ENCODE measurements at regions of chr3 and their contacts with region 1.

Region 1: DNA sequence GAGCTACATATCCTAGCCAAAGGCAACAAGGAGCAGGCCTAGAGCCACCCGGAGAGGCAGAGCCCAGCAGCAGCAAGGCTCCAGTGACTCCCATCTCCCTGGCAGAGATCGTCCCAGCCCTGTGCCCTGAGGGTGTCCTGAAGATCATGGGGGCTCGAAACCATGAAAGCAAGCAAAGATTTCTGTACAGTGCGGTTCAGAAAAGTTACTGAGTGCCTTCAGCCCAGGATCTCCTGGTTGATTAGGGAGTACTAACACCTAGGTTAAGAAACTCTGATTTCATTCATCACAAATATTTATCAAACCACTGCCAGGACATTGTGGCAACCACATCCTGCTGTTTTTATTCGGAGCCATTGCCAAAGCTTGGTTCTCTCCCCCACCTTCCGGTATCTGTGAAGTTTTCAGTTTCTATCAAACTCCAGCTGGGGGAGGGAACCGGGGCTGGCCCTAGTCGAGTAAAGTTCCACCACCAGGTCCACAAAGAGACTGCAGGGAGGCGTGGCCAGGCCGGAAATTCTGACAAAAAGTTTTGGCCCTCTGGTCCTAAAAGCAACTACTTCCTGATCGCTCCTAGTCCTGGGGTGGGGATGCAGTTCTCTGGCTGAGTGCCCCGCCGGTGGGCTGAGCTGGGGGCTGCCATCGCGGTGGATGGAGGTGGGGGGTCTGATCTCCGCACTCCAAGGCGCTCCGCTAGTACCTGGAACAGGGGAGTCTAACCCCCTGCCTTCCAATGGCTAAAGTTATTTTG is 1.2 kb downstream of the RAB43 start:
- DNase-seq: peak; percentile 72
- ATAC-seq: peak; percentile 65
- H3K4me3 Mint-ChIP-seq: peak overlapping the region; percentile 87
- H3K27ac Mint-ChIP-seq: peak overlapping the region; percentile 86
- H3K4me1 Mint-ChIP-seq: peaks cover 54% of the 10 kb centered on the region
- H3K27me3 Mint-ChIP-seq: no peaks in the 10 kb centered on the region
- CTCF ChIP-seq: no peak

Region 2: GRCh38 chr3:128650096-128651050 is 470.1 kb before region 1 on chr3 and contains the start of gene RPN1:
- CTCF ChIA-PET with region 1: no interaction called
- POLR2A ChIA-PET with region 1: no interaction called
- intact Hi-C with region 1: loop called (anchors 1 kb)
- DNase-seq: peak; percentile 90
- ATAC-seq: peak; percentile 97
- H3K4me3 Mint-ChIP-seq: peak within 1 kb of the TSS; percentile 89
- H3K27ac Mint-ChIP-seq: peak within 1 kb of the TSS; percentile 86
- H3K4me1 Mint-ChIP-seq: peaks cover 41% of the 10 kb centered on the region
- H3K27me3 Mint-ChIP-seq: no peaks in the 10 kb centered on the region
- CTCF ChIP-seq: no peak
- total RNA-seq, gene RPN1: 93.4 and 95.2 TPM in 2 replicates

Region 3: DNA sequence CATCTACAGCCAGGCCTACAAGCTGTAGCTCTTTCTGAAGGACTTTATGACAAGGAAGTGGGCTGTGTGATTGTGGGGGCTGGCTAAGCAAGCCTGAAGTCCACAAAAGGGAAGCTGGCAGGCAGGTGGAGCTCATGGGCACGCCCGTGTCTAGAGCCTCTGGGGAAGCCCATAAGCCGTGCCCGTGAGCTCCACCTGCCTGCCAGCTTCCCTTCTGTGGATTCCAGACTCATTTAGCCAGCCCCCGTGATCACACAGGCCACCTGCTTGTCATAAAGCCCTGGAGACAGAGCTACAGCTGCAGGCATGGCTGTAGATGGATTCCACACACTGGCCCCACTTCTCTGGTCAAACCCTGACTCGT is 104.1 kb before region 1 on chr3:
- CTCF ChIA-PET with region 1: interaction called, 3 read pairs
- POLR2A ChIA-PET with region 1: interaction called, 14 read pairs
- intact Hi-C with region 1: loop called (anchors 1 kb)
- DNase-seq: peak; percentile 59
- ATAC-seq: peak; percentile 87
- H3K4me3 Mint-ChIP-seq: peak overlapping the region; percentile 55
- H3K27ac Mint-ChIP-seq: peak overlapping the region; percentile 80
- H3K4me1 Mint-ChIP-seq: peaks cover 41% of the 10 kb centered on the region
- H3K27me3 Mint-ChIP-seq: no peaks in the 10 kb centered on the region
- CTCF ChIP-seq: no peak

Region 4: GRCh38 chr3:129132097-129132866 is 11.9 kb after region 1 on chr3:
- CTCF ChIA-PET with region 1: no interaction called
- POLR2A ChIA-PET with region 1: interaction called, 10 read pairs
- intact Hi-C with region 1: no loop called
- DNase-seq: no peak
- ATAC-seq: no peak
- H3K4me3 Mint-ChIP-seq: no peak overlapping the region
- H3K27ac Mint-ChIP-seq: no peak overlapping the region
- H3K4me1 Mint-ChIP-seq: no peaks in the 10 kb centered on the region
- H3K27me3 Mint-ChIP-seq: no peaks in the 10 kb centered on the region
- CTCF ChIP-seq: no peak

Region 5: DNA sequence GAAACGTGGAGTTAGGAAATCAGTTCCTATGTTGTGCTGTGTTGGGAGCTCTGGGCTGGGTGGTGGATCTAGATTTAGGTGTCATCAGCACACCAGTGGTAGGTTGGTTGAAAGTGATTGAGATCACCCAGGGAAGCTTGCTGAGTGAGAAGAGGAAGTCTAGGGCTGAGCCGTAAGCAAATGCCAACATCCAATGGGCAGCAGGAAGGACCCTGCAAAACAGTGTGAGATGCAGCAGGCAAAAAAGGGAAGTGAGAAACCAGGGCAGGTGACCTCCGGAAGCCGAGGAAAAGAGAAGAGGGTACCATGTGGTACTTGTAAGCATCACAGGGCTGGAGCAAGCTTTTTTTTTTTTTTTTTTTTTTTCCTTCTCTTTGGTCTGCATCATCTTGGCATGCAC is 113.1 kb after region 1 on chr3:
- CTCF ChIA-PET with region 1: no interaction called
- POLR2A ChIA-PET with region 1: interaction called, 9 read pairs
- intact Hi-C with region 1: loop called (anchors 2 kb)
- DNase-seq: peak; percentile 53
- ATAC-seq: peak; percentile 93
- H3K4me3 Mint-ChIP-seq: peak overlapping the region; percentile 50
- H3K27ac Mint-ChIP-seq: peak overlapping the region; percentile 88
- H3K4me1 Mint-ChIP-seq: peaks cover 52% of the 10 kb centered on the region
- H3K27me3 Mint-ChIP-seq: no peaks in the 10 kb centered on the region
- CTCF ChIP-seq: no peak

Region 6: DNA sequence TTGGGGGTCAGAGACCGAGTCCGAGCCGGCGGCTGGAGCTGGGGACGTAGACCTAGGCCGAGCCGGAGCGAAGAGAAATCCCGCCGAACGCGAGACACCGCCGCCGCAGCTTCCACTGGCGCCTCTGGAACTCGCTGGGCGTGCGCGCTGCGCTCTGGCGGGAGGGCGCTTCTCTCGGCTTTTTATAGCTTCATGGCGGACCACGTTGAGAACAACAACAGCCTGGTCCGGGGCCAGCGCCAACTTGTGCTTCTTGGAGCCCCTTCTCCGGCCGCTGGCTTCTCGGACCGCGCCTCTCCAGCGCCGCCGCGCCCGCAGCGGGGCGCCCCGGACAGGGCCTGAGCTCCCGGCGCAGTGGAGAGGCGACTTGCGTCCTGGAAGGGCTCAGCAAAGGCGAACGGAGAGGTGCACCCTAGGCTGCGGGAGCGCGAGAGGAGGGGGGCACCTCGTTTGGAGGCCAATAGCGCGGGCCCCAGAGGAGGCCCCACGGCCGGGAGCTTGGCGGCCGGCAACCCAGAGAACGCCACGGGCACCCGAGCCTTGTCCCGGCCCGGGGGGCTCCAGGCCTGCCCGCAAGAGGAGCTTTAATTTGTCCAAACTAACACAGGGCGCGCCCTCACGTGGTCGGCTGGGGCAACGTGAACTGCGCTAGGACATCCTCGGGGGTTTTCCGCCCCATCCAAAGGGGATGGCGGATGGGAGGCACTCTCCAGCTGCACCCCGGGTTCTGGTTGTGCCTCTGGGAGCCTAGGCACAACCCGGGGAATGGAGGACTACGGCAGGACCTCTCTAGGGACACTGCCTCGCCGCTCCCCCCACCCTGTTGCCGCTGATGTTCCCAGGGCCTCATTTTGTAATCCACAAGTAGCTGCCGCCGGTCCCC is 195.9 kb after region 1 on chr3:
- CTCF ChIA-PET with region 1: interaction called, 3 read pairs
- POLR2A ChIA-PET with region 1: interaction called, 21 read pairs
- intact Hi-C with region 1: loop called (anchors 2 kb)
- DNase-seq: peak; percentile 69
- ATAC-seq: peak; percentile 38
- H3K4me3 Mint-ChIP-seq: peak overlapping the region; percentile 76
- H3K27ac Mint-ChIP-seq: no peak overlapping the region
- H3K4me1 Mint-ChIP-seq: peaks cover 24% of the 10 kb centered on the region
- H3K27me3 Mint-ChIP-seq: peaks cover 17% of the 10 kb centered on the region
- CTCF ChIP-seq: no peak

Measured in activated B cell treated with CpG ODN at 0.5 μM for 24 hours (primary cell).